CD8-positive, alpha-beta T cell (primary cell): ENCODE measurements at regions of chr11 and their contacts with region 1.

Region 1: GRCh38 chr11:9250139-9250582 is 15.0 kb downstream of the DENND5A start:
- DNase-seq: peak in 5 of 9 experiments; percentile 46 to 85 (median 55)
- ATAC-seq: peak; percentile 87
- H3K4me3 ChIP-seq: peak overlapping the region in 1 of 2 experiments; percentile 26
- H3K4me3 Mint-ChIP-seq: peak overlapping the region; percentile 66
- H3K27ac ChIP-seq: peak overlapping the region in 1 of 2 experiments; percentile 7
- H3K27ac Mint-ChIP-seq: peak overlapping the region; percentile 81
- H3K4me1 ChIP-seq: peaks cover 71% of the 10 kb centered on the region
- H3K4me1 Mint-ChIP-seq: peaks cover 64% of the 10 kb centered on the region
- H3K27me3 ChIP-seq: no peaks in the 10 kb centered on the region
- H3K27me3 Mint-ChIP-seq: no peaks in the 10 kb centered on the region
- CTCF ChIP-seq: no peak

Region 2: GRCh38 chr11:9225748-9226298 is 24.3 kb before region 1 on chr11:
- CTCF ChIA-PET with region 1: no interaction called
- POLR2A ChIA-PET with region 1: no interaction called
- intact Hi-C with region 1: loop called in 1 of 2 experiments (anchors 2 kb)
- DNase-seq: no peak
- ATAC-seq: no peak
- H3K4me3 ChIP-seq: no peak overlapping the region
- H3K4me3 Mint-ChIP-seq: no peak overlapping the region
- H3K27ac ChIP-seq: no peak overlapping the region
- H3K27ac Mint-ChIP-seq: no peak overlapping the region
- H3K4me1 ChIP-seq: peaks cover 5% of the 10 kb centered on the region
- H3K4me1 Mint-ChIP-seq: peaks cover 37% of the 10 kb centered on the region
- H3K27me3 ChIP-seq: no peaks in the 10 kb centered on the region
- H3K27me3 Mint-ChIP-seq: no peaks in the 10 kb centered on the region
- CTCF ChIP-seq: no peak

Region 3: GRCh38 chr11:9280655-9281301 is 30.6 kb after region 1 on chr11:
- CTCF ChIA-PET with region 1: interaction called, 3 read pairs
- POLR2A ChIA-PET with region 1: interaction called, 12 read pairs
- intact Hi-C with region 1: loop called in 1 of 2 experiments (anchors 2 kb)
- DNase-seq: peak in 8 of 9 experiments; percentile 29 to 85 (median 60)
- ATAC-seq: peak; percentile 87
- H3K4me3 ChIP-seq: peak overlapping the region in 1 of 2 experiments; percentile 17
- H3K4me3 Mint-ChIP-seq: peak overlapping the region; percentile 54
- H3K27ac ChIP-seq: no peak overlapping the region
- H3K27ac Mint-ChIP-seq: peak overlapping the region; percentile 66
- H3K4me1 ChIP-seq: peaks cover 18% of the 10 kb centered on the region
- H3K4me1 Mint-ChIP-seq: peaks cover 24% of the 10 kb centered on the region
- H3K27me3 ChIP-seq: no peaks in the 10 kb centered on the region
- H3K27me3 Mint-ChIP-seq: no peaks in the 10 kb centered on the region
- CTCF ChIP-seq: no peak